AG04450 (cell line): ENCODE measurements at regions of chr15 and their contacts with region 1.

Region 1: DNA sequence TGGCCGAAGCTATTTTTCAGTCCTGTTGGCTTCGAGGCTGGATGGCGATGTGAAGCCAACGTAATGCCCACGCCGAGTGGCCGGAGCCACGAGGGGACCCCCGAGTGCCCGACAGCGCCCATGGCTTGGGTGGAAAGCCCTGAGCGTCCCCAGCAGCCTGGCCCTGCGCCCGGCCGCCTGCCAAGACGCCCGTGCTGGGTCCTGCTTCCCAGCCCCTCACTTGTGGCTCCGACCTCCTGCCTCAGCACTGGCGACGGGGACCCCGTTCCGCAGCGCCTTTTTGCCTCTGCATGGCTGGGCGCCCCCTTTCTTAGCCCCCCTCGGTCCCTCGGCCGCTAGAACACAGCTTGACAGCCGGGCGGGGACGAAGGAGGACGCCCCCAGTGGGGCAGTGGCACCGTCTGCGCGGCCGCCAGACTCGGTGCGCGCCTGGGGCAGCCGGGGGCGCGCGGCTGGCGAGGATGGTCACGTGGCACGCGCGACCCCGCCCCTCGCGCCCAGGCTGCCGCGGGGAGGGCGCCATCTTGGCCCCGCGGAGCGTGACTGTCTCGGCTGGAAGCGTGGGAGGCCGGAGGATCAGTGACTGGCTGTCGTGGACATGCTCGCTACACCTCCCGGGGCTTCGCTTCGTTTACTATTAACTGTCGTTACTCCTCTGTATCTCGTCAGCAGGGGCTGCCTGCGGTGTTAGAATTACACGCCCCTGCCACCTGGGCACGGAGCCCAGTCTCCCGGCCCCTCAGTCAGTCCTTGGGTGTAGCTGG is 626 bp upstream of the GPR176 start:
- DNase-seq: no peak
- H3K4me3 ChIP-seq: peak overlapping the region; percentile 85
- H3K27ac ChIP-seq: peak overlapping the region; percentile 90
- H3K27me3 ChIP-seq: no peaks in the 10 kb centered on the region
- CTCF ChIP-seq: no peak

Region 2: DNA sequence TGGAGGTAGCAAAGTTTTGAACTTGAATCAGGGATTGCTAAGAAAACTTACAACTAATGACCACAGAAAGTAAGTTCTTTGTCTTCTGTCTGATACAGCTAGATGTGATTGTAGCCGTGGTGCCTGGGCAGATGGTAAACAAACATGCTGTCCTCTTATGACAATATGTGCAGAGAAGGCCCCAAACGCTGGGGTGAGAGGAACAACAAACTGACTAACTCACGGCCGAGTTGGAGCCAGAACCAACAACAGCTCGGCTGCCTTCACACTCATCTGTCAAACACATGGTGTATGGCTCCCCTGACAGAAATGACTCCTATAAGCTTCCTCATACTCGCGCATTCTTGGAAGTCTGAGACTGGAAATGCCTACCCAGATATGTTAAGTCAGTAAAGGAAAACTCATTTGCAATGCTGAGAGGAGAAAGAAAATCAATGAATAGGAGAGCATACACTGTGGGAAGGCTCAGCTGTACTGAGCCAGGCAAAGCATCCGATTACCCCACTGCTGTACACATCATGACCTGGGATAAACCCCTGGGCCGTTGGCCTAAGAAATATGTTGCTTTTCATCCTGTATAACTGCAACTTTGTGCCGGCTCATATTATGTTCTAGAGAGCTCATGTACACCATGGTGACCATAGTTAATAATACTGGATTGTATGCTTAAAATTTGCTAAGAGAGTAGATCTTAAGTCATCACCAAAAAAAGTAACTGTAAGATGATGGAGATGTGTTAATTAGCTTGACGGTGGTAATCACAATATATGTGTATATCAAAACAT is 334.1 kb before region 1 on chr15:
- CTCF ChIA-PET with region 1: no interaction called
- POLR2A ChIA-PET with region 1: no interaction called
- DNase-seq: no peak
- H3K4me3 ChIP-seq: peak overlapping the region; percentile 99
- H3K27ac ChIP-seq: peak overlapping the region; percentile 12
- H3K27me3 ChIP-seq: no peaks in the 10 kb centered on the region
- CTCF ChIP-seq: no peak

Region 3: GRCh38 chr15:39934397-39935071 is 13.8 kb after region 1 on chr15:
- CTCF ChIA-PET with region 1: interaction called, 3 read pairs
- POLR2A ChIA-PET with region 1: interaction called, 26 read pairs
- DNase-seq: no peak
- H3K4me3 ChIP-seq: peak overlapping the region; percentile 65
- H3K27ac ChIP-seq: peak overlapping the region; percentile 60
- H3K27me3 ChIP-seq: no peaks in the 10 kb centered on the region
- CTCF ChIP-seq: no peak